ENCODE measurements at regions of chr14 and their contacts with region 1.

Region 1: GRCh38 chr14:75126679-75127473 is at the start of gene NEK9:
- DNase-seq: peak; percentile 84 to 93
- H3K4me3 ChIP-seq: peak within 1 kb of the TSS; percentile 90
- H3K4me1 ChIP-seq: peaks cover 22% of the 10 kb centered on the region
- H3K27me3 ChIP-seq: no peaks in the 10 kb centered on the region

Region 2: DNA sequence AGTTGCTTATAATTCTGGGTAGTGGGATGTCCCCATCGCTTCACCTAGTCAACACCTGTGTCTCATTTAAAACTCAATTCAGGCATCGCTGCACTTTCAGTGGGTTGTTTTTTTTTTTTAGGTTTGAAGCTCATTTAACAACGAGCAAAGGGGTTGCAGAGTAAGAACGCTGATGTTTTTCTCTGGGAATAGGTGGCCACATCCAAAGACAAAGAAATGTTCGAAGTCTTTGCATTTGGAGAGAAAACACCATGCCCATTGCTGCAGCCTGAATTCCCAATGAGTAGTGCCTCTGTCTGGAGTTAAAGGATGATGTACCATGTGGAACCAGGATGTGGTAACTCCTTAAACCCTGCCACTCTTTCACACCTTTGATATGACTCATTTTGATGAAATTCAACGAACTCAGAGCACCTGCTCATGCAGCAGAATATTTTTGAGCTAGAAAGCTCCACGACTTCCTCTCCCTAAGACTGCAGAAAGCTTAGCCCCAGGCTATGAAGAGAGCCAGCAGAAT is 360.3 kb after region 1 on chr14:
- in situ Hi-C with region 1: loop called (anchors 10 kb)
- DNase-seq: no peak
- H3K4me3 ChIP-seq: no peak overlapping the region
- H3K4me1 ChIP-seq: no peaks in the 10 kb centered on the region
- H3K27me3 ChIP-seq: no peaks in the 10 kb centered on the region; the same call in 1 of the 2 replicates

Region 3: GRCh38 chr14:75660630-75661494 is 534.0 kb after region 1 on chr14 and contains the starts of genes ERG28 and TTLL5:
- in situ Hi-C with region 1: loop called (anchors 25 kb)
- DNase-seq: peak; percentile 96 to 97
- H3K4me3 ChIP-seq: peak within 1 kb of the TSS; percentile 98
- H3K4me1 ChIP-seq: peaks cover 8% of the 10 kb centered on the region
- H3K27me3 ChIP-seq: no peaks in the 10 kb centered on the region

Region 4: GRCh38 chr14:75952489-75952888 is 825.6 kb after region 1 on chr14:
- in situ Hi-C with region 1: no loop called
- DNase-seq: no peak
- H3K4me3 ChIP-seq: no peak overlapping the region
- H3K4me1 ChIP-seq: no peaks in the 10 kb centered on the region
- H3K27me3 ChIP-seq: no peaks in the 10 kb centered on the region

Measured in HAP-1 (cell line).